Sigmoid colon (tissue), 7 donors: ENCODE measurements at regions of chr4 and their contacts with region 1.

Region 1: DNA sequence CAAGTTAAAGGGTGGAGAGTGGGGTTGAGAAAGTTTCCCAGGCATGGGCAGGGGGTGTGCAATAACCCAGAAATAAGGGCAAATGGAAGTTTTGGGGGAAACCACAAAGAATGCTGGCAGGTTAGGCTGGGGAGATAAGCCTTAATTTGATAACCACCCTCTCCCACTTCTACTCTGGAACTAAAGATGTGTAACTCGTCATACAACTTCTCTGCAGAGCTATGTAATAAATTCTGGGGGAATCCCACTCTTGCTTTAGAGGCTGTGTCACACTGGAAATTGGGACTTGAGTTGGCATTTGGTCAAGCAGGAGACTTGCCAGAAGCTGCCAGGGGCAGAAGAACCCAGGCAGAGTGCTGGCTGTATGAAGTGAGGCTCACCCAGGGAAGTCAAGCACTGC is 170.9 kb upstream of the CPEB2 start:
- DNase-seq: no peak
- H3K4me3 ChIP-seq: no peak overlapping the region
- H3K27ac ChIP-seq: no peak overlapping the region
- H3K4me1 ChIP-seq: peaks cover 2 to 17% (median 8%) of the 10 kb centered on the region in 4 donors
- H3K27me3 ChIP-seq: no peaks in the 10 kb centered on the region
- CTCF ChIP-seq: no peak
- EP300 ChIP-seq: no peak
- POLR2A ChIP-seq: no peak

Region 2: DNA sequence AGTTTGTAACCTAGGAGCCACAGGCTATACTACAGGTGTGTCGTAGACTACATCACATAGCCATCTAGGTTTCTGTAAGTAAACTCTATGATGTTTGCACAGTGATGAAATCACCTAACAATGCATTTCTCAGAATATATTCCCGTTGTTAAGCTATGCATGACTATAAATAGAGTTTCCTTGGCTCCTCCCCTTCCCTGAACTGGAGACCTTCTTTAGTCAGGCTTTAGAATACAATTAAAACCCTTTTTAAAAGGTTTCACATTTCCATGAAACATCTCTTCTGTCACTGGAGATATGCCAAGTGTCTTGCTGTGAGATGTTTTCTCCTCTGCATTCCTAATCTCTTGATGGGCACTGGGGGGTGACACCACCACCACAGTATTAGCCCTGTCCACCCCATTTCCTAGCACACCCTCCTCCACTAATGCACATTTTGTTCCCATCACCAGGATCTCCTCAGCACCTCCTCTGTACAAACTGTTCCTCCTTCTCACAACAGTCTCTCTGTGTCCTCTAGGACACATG is 163.7 kb before region 1 on chr4:
- intact Hi-C with region 1: no loop called
- DNase-seq: no peak
- H3K4me3 ChIP-seq: no peak overlapping the region
- H3K27ac ChIP-seq: no peak overlapping the region
- H3K4me1 ChIP-seq: no peaks in the 10 kb centered on the region
- H3K27me3 ChIP-seq: no peaks in the 10 kb centered on the region
- CTCF ChIP-seq: no peak
- EP300 ChIP-seq: no peak
- POLR2A ChIP-seq: no peak

Region 3: DNA sequence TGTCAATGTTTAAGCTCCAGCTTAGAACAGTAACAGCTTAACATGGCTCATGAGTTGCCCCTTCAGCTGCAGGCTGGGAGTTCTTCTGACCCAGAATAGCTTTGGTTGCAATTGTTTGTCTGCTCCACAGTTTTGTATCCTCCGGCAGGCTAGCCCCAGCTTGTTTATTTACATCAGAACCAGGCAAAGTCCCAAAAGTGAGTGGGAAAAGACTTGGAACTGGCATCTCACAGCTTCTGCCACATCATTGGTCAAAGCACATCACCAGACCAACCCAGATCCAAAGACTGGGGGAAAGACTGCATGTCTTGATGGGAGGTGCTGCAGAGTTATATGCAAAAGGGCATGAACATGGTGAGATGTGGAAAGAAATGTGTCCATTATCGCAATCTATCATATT is 60.3 kb before region 1 on chr4:
- intact Hi-C with region 1: loop called (anchors 5 kb)
- DNase-seq: no peak
- H3K4me3 ChIP-seq: no peak overlapping the region
- H3K27ac ChIP-seq: no peak overlapping the region
- H3K4me1 ChIP-seq: peaks cover 0 to 20% (median 14%) of the 10 kb centered on the region in 4 donors
- H3K27me3 ChIP-seq: no peaks in the 10 kb centered on the region
- CTCF ChIP-seq: no peak
- EP300 ChIP-seq: no peak
- POLR2A ChIP-seq: no peak

Region 4: GRCh38 chr4:15075875-15076274 is 244.5 kb after region 1 on chr4:
- intact Hi-C with region 1: no loop called
- DNase-seq: no peak
- H3K4me3 ChIP-seq: no peak overlapping the region
- H3K27ac ChIP-seq: no peak overlapping the region
- H3K4me1 ChIP-seq: no peaks in the 10 kb centered on the region
- H3K27me3 ChIP-seq: no peaks in the 10 kb centered on the region
- CTCF ChIP-seq: no peak
- EP300 ChIP-seq: no peak
- POLR2A ChIP-seq: no peak

Region 5: DNA sequence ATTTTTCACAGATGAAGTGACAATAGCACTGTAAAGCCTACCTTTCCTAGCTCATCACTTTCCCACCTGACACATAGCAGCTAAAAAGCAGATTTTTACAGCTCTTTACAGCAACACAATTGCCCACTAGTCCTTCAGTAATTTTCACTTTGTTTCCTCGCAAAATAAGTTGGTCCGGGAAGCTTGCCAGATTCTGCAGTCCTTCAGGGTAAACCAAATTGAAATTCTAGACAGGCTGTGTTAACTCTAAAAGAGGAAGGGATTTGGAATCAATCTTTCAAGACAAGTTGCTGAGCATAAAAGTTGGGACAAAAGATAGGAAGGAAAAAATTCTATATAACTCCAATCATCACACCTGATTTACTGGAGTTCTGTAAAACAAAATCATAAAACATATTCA is 605.1 kb after region 1 on chr4:
- intact Hi-C with region 1: no loop called
- DNase-seq: no peak
- H3K4me3 ChIP-seq: no peak overlapping the region
- H3K27ac ChIP-seq: no peak overlapping the region
- H3K4me1 ChIP-seq: peaks cover 0 to 13% (median 7%) of the 10 kb centered on the region in 4 donors
- H3K27me3 ChIP-seq: no peaks in the 10 kb centered on the region
- CTCF ChIP-seq: no peak
- EP300 ChIP-seq: no peak
- POLR2A ChIP-seq: no peak